ENCODE measurements at regions of chrX and their contacts with region 1.

Region 1: DNA sequence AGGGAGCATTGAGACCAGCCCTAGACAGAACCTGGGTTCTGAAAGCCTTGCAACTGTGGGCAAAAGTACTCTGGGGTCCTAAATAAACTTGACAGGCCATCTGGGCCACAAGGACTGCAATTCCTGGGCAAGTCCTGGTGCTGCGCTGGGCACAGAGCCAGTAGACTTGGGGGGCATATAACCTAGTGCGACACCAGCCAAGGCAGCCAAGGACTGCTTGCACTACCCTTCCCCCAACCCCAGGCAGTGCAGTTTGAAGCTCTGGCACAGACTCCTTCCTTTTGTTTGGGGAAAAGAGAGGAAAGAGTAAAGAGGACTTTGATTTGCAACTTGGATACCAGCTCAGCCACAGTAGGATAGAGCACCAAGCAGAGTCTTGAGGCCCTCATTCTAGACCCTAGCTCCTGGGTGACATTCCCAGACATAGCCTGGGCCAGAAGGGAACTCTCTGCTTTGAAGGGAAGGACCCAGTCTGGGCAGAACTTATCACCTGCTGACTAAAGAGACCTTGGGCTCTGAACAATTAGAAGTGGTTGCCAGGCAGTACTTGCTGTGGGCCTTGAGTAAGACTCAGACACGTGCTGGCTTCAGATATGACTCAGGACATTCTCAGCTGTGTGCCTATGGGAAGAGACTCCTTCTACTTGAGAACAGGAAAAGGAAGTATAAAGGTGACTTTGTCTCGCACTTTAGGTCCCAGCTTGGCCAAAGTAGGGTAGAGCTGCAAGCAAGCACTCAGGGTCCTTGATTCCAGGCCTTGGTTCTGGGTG is 522.8 kb downstream of the GLUD2 start:
- DNase-seq: no peak
- H3K4me3 ChIP-seq: no peak overlapping the region
- H3K27ac ChIP-seq: no peak overlapping the region
- H3K4me1 ChIP-seq: peaks cover 8% of the 10 kb centered on the region
- CTCF ChIP-seq: no peak

Region 2: GRCh38 chrX:120790118-120790517 is 780.1 kb before region 1 on chrX:
- CTCF ChIA-PET with region 1: no interaction called
- POLR2A ChIA-PET with region 1: no interaction called
- intact Hi-C with region 1: loop called (anchors 5 kb)
- DNase-seq: peak; percentile 72
- H3K4me3 ChIP-seq: no peak overlapping the region
- H3K27ac ChIP-seq: no peak overlapping the region
- H3K4me1 ChIP-seq: peaks cover 3% of the 10 kb centered on the region
- CTCF ChIP-seq: peak; percentile 83

Region 3: DNA sequence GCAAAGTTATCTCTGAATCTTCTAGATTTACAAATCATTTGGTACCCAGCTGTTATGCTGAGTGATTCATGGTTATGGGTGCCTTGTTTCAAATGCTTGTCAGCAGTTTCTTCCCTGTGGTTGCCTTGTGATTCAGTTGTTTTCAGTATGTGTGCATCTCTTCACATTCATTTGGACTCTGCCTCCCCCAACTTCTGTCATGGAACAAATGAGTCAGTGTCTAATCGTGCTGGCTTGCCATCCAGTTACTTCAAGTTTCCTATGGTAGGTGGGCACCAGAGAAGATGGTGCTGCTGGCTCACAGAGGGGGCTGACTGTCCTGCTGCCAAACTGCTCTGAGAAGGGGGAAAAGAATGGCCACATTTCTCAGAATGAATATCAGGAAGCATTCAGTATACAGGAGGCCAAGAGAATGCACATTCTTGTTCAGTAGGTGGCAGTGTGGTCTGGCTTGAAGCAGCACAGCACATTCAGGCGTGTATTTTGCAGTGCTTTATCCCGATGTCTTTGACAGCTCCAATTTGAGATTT is 261.9 kb before region 1 on chrX:
- CTCF ChIA-PET with region 1: no interaction called
- POLR2A ChIA-PET with region 1: no interaction called
- intact Hi-C with region 1: loop called (anchors 1 kb)
- DNase-seq: peak; percentile 45
- H3K4me3 ChIP-seq: no peak overlapping the region
- H3K27ac ChIP-seq: no peak overlapping the region
- H3K4me1 ChIP-seq: no peaks in the 10 kb centered on the region
- CTCF ChIP-seq: peak; percentile 72

Region 4: GRCh38 chrX:121374471-121374870 is 195.8 kb before region 1 on chrX:
- CTCF ChIA-PET with region 1: no interaction called
- POLR2A ChIA-PET with region 1: no interaction called
- intact Hi-C with region 1: no loop called
- DNase-seq: no peak
- H3K4me3 ChIP-seq: no peak overlapping the region
- H3K27ac ChIP-seq: no peak overlapping the region
- H3K4me1 ChIP-seq: no peaks in the 10 kb centered on the region
- CTCF ChIP-seq: no peak

Measured in OCI-LY7 (cell line).